Caki2 (cell line): ENCODE measurements at regions of chr2 and their contacts with region 1.

Region 1: DNA sequence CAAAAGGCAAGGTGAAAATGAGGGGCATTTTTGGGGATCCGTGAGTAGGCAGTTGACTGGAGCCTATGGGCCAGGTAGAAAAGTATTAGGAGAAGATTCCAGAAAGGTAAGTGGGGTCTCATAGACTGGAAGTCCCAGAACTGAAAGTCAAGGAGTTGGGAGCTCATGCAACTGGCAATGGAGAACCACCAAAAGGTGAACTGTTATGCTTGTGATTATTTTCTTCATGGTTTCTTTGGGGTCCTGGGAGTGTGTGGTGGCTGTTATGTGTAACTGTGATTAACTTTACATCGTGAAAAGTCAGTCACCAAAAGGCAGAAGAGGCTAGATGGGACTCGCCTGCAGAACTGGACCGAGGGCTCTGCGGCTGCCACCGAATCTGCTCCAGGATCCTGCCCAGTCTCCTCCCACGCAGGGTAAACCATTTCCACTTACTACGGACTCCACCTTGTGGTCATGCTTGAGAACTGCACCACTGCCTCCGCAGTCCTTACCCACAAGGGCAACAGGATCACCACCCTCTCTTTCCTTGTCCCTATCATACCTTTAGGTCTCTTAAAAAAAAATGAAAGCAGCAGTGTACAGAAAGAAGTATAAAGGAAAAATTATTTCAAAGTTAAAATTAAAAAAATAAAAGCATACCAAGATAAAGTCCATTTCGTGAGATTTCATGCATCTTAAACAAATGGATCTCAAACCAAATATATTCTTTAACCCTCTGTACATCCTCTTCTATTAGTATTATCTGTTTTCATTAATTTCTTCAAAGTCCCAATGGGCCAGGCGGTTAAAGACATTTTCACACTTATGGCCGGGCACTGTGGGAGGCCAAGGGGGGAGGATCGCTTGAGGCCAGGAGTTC is 15.6 kb upstream of the CEP68 start:
- DNase-seq: peak; percentile 69

Region 2: DNA sequence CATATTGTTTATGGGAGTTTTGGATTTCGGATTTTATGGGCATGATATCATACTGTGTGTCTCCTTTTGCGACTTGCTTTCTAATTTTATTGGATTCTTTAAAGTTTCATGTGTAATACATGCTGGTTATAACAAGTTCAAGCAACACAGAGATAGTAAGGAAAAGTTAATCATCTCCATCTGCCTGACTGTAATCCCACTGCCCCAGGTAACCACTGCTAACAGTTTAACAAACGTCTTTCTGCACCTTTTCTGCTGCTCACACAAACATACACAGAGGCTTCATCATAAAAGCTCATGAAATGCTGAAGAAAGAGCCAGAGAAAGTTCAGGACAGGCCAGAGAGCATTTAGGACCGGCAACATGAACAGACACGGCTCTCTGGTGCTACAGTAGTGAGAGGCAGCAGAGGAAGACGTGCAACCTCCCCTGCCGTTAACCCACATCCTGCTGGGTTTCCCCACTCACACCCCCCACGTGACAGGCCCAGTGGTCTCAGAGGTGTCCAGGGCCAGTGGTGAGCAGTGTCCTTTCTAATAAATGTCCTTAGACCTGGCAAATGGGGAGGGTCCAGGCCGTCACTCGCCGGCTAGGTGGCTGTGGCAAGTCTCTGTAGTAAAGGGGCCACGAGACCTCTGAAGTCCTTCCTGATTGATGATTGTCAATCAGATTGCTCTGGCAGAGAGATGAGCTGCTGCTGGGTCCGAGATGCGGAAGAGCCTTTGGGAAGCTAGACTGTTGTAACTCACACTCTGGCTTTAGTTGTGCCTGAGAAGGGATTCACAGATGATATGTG is 94.5 kb before region 1 on chr2:
- in situ Hi-C with region 1: loop called (anchors 25 kb)
- DNase-seq: no peak